CD4-positive, alpha-beta T cell (primary cell): ENCODE measurements at regions of chr11 and their contacts with region 1.

Region 1: DNA sequence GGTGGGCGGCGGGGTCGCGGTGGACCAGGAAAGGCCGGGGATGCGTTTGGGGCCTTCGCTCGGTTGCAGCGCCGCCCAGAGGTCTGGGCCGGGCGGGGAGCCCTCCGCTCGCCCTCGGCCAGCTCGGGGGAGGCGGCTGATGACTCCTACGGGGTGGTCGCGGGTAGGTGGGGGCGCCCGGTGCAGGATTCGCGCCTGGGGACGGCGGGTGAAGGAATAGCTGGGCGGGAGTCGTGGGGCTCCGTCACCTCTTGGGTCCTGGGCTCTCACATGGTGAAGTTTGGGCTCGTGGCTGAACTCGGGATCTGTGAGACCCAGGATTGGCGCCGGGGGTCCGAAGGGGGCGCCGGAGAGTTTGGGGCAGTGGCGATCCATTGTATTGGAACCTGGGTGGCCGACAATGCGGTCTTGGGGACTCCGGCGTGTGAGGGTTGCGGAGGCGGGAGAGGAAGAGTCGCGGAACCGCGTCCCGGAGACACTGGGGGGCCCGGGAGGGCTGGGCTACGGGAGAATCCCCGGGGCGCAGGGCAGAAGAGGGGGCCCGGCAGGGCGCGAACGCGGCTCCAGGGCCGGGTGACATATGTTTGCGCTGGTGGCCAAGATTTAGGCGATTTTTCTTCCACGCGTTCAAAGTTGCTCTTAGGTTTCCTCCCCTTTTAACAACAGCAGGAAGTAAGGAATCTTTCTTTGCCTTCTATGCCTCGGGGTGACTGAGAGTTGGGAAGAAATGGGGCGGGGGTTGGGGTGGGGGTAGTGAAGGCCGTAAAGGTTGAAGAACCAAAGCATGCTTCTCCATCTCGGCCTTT is 935 bp downstream of the QSER1 start:
- DNase-seq: peak in 11 of 14 experiments; percentile 22 to 76 (median 39)
- ATAC-seq: peak; percentile 35
- H3K4me3 ChIP-seq: peak overlapping the region; percentile 83
- H3K4me3 Mint-ChIP-seq: peak overlapping the region; percentile 91
- H3K27ac ChIP-seq: peak overlapping the region in 1 of 2 donors; percentile 18
- H3K27ac Mint-ChIP-seq: peak overlapping the region; percentile 80
- H3K4me1 ChIP-seq: peaks cover 14% of the 10 kb centered on the region
- H3K4me1 Mint-ChIP-seq: peaks cover 37% of the 10 kb centered on the region
- H3K27me3 ChIP-seq: no peaks in the 10 kb centered on the region
- H3K27me3 Mint-ChIP-seq: no peaks in the 10 kb centered on the region
- CTCF ChIP-seq: peak; percentile 48

Region 2: GRCh38 chr11:32583459-32584271 is 309.9 kb before region 1 on chr11 and contains the start of gene EIF3M:
- CTCF ChIA-PET with region 1: no interaction called
- POLR2A ChIA-PET with region 1: interaction called, 12 read pairs
- intact Hi-C with region 1: loop called in 1 of 2 experiments (anchors 5 kb)
- DNase-seq: peak; percentile 92 to 98 (median 95)
- ATAC-seq: peak; percentile 98
- H3K4me3 ChIP-seq: peak within 1 kb of the TSS; percentile 89
- H3K4me3 Mint-ChIP-seq: peak within 1 kb of the TSS; percentile 94
- H3K27ac ChIP-seq: peak within 1 kb of the TSS; percentile 84 to 87
- H3K27ac Mint-ChIP-seq: peak within 1 kb of the TSS; percentile 94
- H3K4me1 ChIP-seq: peaks cover 38% of the 10 kb centered on the region
- H3K4me1 Mint-ChIP-seq: peaks cover 52% of the 10 kb centered on the region
- H3K27me3 ChIP-seq: no peaks in the 10 kb centered on the region
- H3K27me3 Mint-ChIP-seq: no peaks in the 10 kb centered on the region
- CTCF ChIP-seq: no peak
- total RNA-seq, gene EIF3M: 260 to 264 TPM

Region 3: DNA sequence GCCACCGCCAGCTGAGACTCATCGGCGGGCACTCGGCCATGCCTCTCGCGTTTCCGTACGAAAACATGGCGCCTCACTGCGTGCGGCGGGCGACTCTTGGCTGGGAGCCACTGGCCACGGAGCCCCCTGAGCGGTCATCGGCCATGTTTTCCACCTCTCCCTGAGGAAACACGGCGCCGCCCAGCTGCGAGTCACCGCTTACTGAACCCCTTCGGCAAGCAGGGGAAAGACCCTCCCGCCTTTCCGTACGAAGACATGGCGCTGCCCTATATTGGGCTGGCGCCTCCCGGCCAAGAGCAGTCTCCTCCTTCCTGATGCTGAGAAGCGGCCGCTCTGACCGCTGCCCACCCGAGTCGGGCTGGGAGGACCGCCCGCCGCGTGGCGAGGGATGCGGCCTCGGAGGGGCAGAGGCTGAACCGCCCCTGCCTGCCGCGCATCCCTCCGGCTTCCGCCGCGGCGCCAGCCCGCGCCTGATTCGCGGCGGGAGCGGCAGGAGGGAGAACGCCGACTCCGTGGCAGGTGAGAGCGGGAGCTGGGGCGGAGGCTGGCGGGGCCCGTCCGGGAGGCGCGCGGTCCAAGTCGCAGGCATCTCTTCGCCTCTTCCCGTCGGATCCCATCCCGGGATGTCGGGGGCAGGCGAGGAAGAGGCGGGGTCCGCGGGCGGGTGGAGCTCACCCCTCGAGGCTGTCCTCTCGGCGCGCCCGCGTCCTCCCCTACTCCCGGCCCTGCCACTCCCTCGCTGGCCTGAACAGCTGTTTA is 145.9 kb after region 1 on chr11 and contains the start of gene TCP11L1:
- CTCF ChIA-PET with region 1: interaction called, 4 read pairs
- POLR2A ChIA-PET with region 1: interaction called, 13 read pairs
- intact Hi-C with region 1: no loop called
- DNase-seq: peak; percentile 66 to 91 (median 78)
- ATAC-seq: peak; percentile 85
- H3K4me3 ChIP-seq: peak within 1 kb of the TSS; percentile 99
- H3K4me3 Mint-ChIP-seq: peak within 1 kb of the TSS; percentile 98
- H3K27ac ChIP-seq: peak within 1 kb of the TSS; percentile 62 to 90
- H3K27ac Mint-ChIP-seq: peak within 1 kb of the TSS; percentile 95
- H3K4me1 ChIP-seq: peaks cover 17% of the 10 kb centered on the region
- H3K4me1 Mint-ChIP-seq: peaks cover 17% of the 10 kb centered on the region
- H3K27me3 ChIP-seq: no peaks in the 10 kb centered on the region
- H3K27me3 Mint-ChIP-seq: peaks cover 5% of the 10 kb centered on the region
- CTCF ChIP-seq: no peak
- total RNA-seq, gene TCP11L1: 9.8 to 11.9 TPM

Region 4: DNA sequence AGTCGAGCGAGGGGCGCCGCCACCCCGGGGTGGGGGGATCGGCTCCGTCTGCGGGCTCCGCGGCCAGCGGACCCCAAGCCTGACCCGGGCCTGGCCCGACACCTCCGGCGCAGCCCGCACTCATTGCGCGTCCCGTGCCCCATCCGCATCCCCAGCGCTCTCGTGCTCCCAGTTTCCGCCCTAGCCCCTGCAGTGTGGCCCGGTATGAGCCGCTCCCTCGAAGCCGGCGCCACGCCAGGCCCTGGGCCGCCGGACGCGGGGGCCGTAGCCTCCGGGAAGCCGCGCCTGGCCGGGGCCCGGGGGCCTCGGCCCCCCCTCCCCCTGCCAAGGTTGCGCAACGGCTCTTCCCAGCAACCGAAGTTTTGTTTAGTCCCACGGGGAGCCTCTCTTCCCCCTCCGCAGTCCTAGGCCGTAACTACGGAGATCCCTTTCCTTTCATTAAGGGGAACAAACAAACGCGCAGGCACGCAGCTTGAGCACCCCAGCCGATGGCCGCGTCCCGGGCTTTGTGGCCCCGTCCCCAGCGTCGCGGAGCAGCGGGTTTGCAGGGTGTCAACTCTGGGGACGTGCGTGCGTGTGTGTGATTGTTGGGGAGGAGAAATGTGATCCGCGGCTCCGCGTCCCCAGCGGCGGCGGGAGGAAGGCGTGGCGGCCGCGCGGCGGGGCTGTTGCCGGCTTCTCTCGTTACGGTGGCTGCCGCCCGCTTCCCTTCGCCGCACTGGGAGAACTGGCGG is 364.5 kb after region 1 on chr11:
- CTCF ChIA-PET with region 1: no interaction called
- POLR2A ChIA-PET with region 1: interaction called, 6 read pairs
- intact Hi-C with region 1: loop called in 1 of 2 experiments (anchors 5 kb)
- DNase-seq: peak; percentile 58 to 89 (median 71)
- ATAC-seq: peak; percentile 68
- H3K4me3 ChIP-seq: peak overlapping the region; percentile 88
- H3K4me3 Mint-ChIP-seq: peak overlapping the region; percentile 97
- H3K27ac ChIP-seq: peak overlapping the region; percentile 94 to 97
- H3K27ac Mint-ChIP-seq: peak overlapping the region; percentile 94
- H3K4me1 ChIP-seq: peaks cover 15% of the 10 kb centered on the region
- H3K4me1 Mint-ChIP-seq: peaks cover 55% of the 10 kb centered on the region
- H3K27me3 ChIP-seq: no peaks in the 10 kb centered on the region
- H3K27me3 Mint-ChIP-seq: no peaks in the 10 kb centered on the region
- CTCF ChIP-seq: no peak

Region 5: DNA sequence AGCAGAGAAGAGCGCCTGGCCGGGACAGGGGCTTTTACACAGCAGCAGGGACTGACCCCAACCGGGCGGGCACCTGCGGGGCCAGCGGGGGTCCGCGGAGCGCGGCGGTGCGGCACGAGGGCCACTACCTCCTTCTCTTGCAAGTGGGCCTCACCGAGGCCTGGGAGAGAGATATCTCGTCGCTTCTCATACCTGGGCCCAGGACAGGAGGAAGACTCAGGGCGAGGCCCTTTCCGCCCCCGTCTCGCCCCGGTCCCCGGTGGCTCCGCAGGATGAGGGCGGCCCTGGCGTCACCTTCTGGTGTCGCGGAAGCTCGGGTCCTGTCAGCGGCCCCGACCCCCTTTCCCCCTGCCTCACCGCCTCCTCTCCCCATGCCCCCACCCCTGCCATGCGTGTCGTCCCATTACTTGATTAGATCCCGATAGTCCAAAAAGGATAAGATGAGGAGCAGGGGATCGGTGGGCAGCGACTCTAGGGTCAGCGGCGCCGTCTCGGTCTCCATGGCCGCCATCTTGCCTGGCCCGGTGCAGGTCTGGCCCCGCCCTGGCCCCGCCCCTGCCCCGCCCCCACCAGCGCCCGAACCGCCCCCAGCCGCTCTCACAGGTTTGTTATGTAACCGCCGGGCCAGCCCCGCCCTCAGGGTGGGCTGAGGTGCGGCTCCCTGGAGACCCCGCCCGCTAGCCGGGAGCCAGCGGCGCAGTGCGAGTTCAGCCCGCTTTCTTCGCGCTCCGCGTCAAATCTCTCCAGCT is 880.6 kb after region 1 on chr11 and contains the start of gene FBXO3:
- CTCF ChIA-PET with region 1: no interaction called
- POLR2A ChIA-PET with region 1: no interaction called
- intact Hi-C with region 1: loop called in 1 of 2 experiments (anchors 5 kb)
- DNase-seq: peak; percentile 78 to 95 (median 86)
- ATAC-seq: peak; percentile 86
- H3K4me3 ChIP-seq: peak within 1 kb of the TSS; percentile 73
- H3K4me3 Mint-ChIP-seq: peak within 1 kb of the TSS; percentile 97
- H3K27ac ChIP-seq: peak within 1 kb of the TSS; percentile 64 to 75
- H3K27ac Mint-ChIP-seq: peak within 1 kb of the TSS; percentile 97
- H3K4me1 ChIP-seq: peaks cover 41% of the 10 kb centered on the region
- H3K4me1 Mint-ChIP-seq: peaks cover 61% of the 10 kb centered on the region
- H3K27me3 ChIP-seq: peaks cover 0 to 7% of the 10 kb centered on the region in 2 experiments
- H3K27me3 Mint-ChIP-seq: peaks cover 8% of the 10 kb centered on the region
- CTCF ChIP-seq: no peak
- total RNA-seq, gene FBXO3: 62.0 to 63.4 TPM